A673 (cell line): ENCODE measurements at regions of chr13 and their contacts with region 1.

Region 1: GRCh38 chr13:31236211-31236786 is 36.5 kb downstream of the B3GLCT start:
- DNase-seq: peak; percentile 64
- H3K4me3 ChIP-seq: no peak overlapping the region
- H3K27ac ChIP-seq: no peak overlapping the region
- H3K4me1 ChIP-seq: no peaks in the 10 kb centered on the region
- H3K27me3 ChIP-seq: no peaks in the 10 kb centered on the region
- CTCF ChIP-seq: peak; percentile 88

Region 2: GRCh38 chr13:31301119-31301518 is 64.8 kb after region 1 on chr13:
- CTCF ChIA-PET with region 1: no interaction called
- POLR2A ChIA-PET with region 1: no interaction called
- intact Hi-C with region 1: no loop called
- DNase-seq: no peak
- H3K4me3 ChIP-seq: no peak overlapping the region
- H3K27ac ChIP-seq: no peak overlapping the region
- H3K4me1 ChIP-seq: no peaks in the 10 kb centered on the region
- H3K27me3 ChIP-seq: no peaks in the 10 kb centered on the region
- CTCF ChIP-seq: no peak

Region 3: GRCh38 chr13:31424117-31424729 is 187.9 kb after region 1 on chr13:
- CTCF ChIA-PET with region 1: interaction called, 16 read pairs
- POLR2A ChIA-PET with region 1: no interaction called
- intact Hi-C with region 1: loop called (anchors 1 kb)
- DNase-seq: peak; percentile 84
- H3K4me3 ChIP-seq: no peak overlapping the region
- H3K27ac ChIP-seq: no peak overlapping the region
- H3K4me1 ChIP-seq: no peaks in the 10 kb centered on the region
- H3K27me3 ChIP-seq: no peaks in the 10 kb centered on the region
- CTCF ChIP-seq: peak; percentile 95

Region 4: GRCh38 chr13:31686670-31687425 is 450.5 kb after region 1 on chr13:
- CTCF ChIA-PET with region 1: no interaction called
- POLR2A ChIA-PET with region 1: no interaction called
- intact Hi-C with region 1: no loop called
- DNase-seq: no peak
- H3K4me3 ChIP-seq: no peak overlapping the region
- H3K27ac ChIP-seq: no peak overlapping the region
- H3K4me1 ChIP-seq: no peaks in the 10 kb centered on the region
- H3K27me3 ChIP-seq: no peaks in the 10 kb centered on the region
- CTCF ChIP-seq: no peak

Region 5: GRCh38 chr13:31742097-31742734 is 505.9 kb after region 1 on chr13:
- CTCF ChIA-PET with region 1: no interaction called
- POLR2A ChIA-PET with region 1: no interaction called
- intact Hi-C with region 1: loop called (anchors 10 kb)
- DNase-seq: peak; percentile 72
- H3K4me3 ChIP-seq: no peak overlapping the region
- H3K27ac ChIP-seq: no peak overlapping the region
- H3K4me1 ChIP-seq: no peaks in the 10 kb centered on the region
- H3K27me3 ChIP-seq: no peaks in the 10 kb centered on the region
- CTCF ChIP-seq: peak; percentile 95